Activated CD4-positive, alpha-beta memory T cell treated with anti-CD3 and anti-CD28 coated beads, Interleukin-2, amount 10 ng/mL, durations not matched to agents 7 days and 5 days (primary cell): ENCODE measurements at regions of chr6 and their contacts with region 1.

Region 1: GRCh38 chr6:83536034-83536646 is 23.8 kb downstream of the PRSS35 start:
- DNase-seq: peak; percentile 54
- H3K4me3 Mint-ChIP-seq: no peak overlapping the region
- H3K27ac Mint-ChIP-seq: no peak overlapping the region
- H3K4me1 Mint-ChIP-seq: no peaks in the 10 kb centered on the region
- H3K27me3 Mint-ChIP-seq: no peaks in the 10 kb centered on the region

Region 2: GRCh38 chr6:83221889-83222479 is 314.2 kb before region 1 on chr6:
- CTCF ChIA-PET with region 1: interaction called, 11 read pairs
- POLR2A ChIA-PET with region 1: no interaction called
- DNase-seq: no peak
- H3K4me3 Mint-ChIP-seq: no peak overlapping the region
- H3K27ac Mint-ChIP-seq: no peak overlapping the region
- H3K4me1 Mint-ChIP-seq: no peaks in the 10 kb centered on the region
- H3K27me3 Mint-ChIP-seq: no peaks in the 10 kb centered on the region

Region 3: GRCh38 chr6:83514866-83515466 is 21.2 kb before region 1 on chr6:
- CTCF ChIA-PET with region 1: interaction called, 11 read pairs
- POLR2A ChIA-PET with region 1: no interaction called
- DNase-seq: peak; percentile 20
- H3K4me3 Mint-ChIP-seq: no peak overlapping the region
- H3K27ac Mint-ChIP-seq: no peak overlapping the region
- H3K4me1 Mint-ChIP-seq: peaks cover 6% of the 10 kb centered on the region
- H3K27me3 Mint-ChIP-seq: peaks cover 36% of the 10 kb centered on the region

Region 4: DNA sequence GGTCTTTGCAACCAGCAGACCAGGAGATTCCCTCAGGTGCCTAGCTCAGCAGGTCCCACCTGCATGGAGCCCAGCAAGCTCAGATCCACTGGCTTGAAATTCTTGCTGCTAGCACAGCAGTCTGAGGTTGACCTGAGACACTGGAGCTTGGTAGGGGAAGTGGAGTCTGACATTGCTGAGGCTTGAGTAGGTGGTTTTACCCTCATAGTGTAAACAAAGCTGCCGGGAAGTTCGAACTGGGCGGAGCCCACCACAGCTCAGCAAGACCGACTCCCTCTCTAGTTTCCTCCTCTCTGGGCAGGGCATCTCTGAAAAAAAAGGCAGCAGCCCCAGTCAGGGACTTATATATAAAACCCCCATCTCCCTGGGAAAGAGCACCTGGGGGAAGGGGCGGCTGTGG is 10.5 kb after region 1 on chr6:
- CTCF ChIA-PET with region 1: interaction called, 10 read pairs
- POLR2A ChIA-PET with region 1: no interaction called
- DNase-seq: peak; percentile 28
- H3K4me3 Mint-ChIP-seq: no peak overlapping the region
- H3K27ac Mint-ChIP-seq: peak overlapping the region; percentile 31
- H3K4me1 Mint-ChIP-seq: peaks cover 13% of the 10 kb centered on the region
- H3K27me3 Mint-ChIP-seq: peaks cover 6% of the 10 kb centered on the region